HEK293 (cell line): ENCODE measurements at regions of chr1 and their contacts with region 1.

Region 1: DNA sequence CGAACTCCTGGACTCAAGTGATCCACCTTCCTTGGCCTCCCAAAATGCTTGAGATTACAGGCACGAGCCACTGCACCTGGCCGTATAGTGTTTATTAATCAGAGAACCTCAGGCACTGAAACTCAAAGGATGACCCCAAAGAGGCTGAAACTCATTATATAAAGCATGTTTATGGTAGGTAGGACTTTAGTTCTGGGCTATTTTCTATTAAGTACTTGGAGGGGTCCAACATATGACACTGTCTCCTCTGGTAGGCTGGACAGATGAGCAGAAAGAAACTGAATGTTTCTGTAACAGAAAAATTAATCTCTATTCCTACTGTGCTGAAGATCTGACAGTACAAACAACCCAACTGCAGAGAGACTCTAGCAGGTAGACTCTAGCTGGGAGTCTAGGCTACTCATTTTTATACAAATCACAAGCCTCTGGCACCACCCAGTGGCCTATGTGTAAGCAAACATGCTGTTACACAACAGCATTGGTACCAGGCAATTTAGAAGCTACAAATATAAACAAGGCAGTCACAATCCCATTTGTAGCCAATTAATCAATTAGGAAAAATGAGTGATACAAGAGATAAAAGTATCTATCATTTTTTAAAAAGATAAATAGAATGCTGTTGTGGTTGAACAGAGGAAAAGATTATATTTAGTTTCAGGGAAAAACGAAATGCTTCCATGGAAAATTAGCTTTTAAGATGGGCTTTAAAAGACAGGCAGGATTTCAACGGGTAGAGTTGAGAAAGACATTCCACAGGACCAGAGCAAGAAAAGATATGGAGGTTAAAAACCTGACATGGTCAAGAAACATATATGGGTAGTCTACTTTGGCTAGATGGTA is 10.4 kb downstream of the DCAF8 start:
- H3K4me3 ChIP-seq: no peak overlapping the region
- H3K27ac ChIP-seq: no peak overlapping the region
- H3K4me1 ChIP-seq: peaks cover 10% of the 10 kb centered on the region; the same call in 1 of the 2 replicates
- CTCF ChIP-seq: no peak

Region 2: GRCh38 chr1:160046494-160047110 is 205.3 kb before region 1 on chr1:
- CTCF ChIA-PET with region 1: interaction called, 10 read pairs
- POLR2A ChIA-PET with region 1: no interaction called
- H3K4me3 ChIP-seq: no peak overlapping the region
- H3K27ac ChIP-seq: no peak overlapping the region
- H3K4me1 ChIP-seq: no peaks in the 10 kb centered on the region
- CTCF ChIP-seq: peak; percentile 59

Region 3: GRCh38 chr1:160108888-160109662 is 142.8 kb before region 1 on chr1:
- CTCF ChIA-PET with region 1: interaction called, 144 read pairs
- POLR2A ChIA-PET with region 1: no interaction called
- H3K4me3 ChIP-seq: no peak overlapping the region
- H3K27ac ChIP-seq: no peak overlapping the region
- H3K4me1 ChIP-seq: no peaks in the 10 kb centered on the region
- CTCF ChIP-seq: no peak

Region 4: DNA sequence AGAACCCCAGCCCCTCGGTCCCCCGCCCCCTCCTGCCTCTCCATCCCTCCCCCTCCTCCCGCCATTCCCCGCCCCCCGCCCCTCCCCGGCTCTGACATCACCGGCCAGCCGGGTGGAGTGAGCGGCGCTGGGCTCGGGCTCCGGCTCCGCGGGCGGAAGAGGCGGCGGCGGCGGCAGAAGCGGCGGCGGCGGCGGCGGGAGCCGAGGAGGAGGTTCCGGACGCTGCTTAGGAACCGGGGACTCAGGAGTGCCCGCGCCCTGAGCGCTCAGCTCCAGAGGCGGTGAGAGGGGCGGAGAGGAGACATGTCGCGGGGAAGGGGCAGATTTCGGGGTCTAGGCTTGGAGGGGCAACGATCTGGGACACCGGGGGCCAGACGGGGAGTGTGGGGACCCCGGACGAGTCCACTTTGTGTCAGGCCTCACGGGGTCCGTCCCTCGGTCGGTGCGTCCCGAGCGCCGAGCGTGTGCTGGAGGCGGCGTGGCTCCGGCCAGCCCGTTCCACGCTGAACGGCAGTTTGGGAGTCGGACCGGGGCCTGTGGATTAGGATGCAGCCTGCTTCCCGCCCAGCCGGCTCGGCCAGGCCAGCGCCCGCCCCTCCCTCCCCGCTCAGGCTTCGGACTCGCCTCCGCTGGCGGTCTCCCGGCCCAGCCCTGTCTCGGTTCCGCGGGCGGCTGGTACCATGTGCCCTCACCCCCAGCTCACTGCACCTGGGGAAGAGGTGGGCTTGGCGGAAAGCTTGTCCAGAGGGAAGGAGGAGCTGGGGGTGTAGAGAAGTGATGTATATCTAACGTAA is 46.5 kb before region 1 on chr1 and contains the start of gene PEA15:
- CTCF ChIA-PET with region 1: interaction called, 12 read pairs
- POLR2A ChIA-PET with region 1: no interaction called
- H3K4me3 ChIP-seq: peak within 1 kb of the TSS; percentile 70
- H3K27ac ChIP-seq: peak within 1 kb of the TSS; percentile 82
- H3K4me1 ChIP-seq: 0 out of 2 replicates have a peak, but pooled peaks cover 2% of the 10 kb centered on the region
- CTCF ChIP-seq: 0 out of 2 replicates have a peak, but pooled peaks have one; percentile 16

Region 5: DNA sequence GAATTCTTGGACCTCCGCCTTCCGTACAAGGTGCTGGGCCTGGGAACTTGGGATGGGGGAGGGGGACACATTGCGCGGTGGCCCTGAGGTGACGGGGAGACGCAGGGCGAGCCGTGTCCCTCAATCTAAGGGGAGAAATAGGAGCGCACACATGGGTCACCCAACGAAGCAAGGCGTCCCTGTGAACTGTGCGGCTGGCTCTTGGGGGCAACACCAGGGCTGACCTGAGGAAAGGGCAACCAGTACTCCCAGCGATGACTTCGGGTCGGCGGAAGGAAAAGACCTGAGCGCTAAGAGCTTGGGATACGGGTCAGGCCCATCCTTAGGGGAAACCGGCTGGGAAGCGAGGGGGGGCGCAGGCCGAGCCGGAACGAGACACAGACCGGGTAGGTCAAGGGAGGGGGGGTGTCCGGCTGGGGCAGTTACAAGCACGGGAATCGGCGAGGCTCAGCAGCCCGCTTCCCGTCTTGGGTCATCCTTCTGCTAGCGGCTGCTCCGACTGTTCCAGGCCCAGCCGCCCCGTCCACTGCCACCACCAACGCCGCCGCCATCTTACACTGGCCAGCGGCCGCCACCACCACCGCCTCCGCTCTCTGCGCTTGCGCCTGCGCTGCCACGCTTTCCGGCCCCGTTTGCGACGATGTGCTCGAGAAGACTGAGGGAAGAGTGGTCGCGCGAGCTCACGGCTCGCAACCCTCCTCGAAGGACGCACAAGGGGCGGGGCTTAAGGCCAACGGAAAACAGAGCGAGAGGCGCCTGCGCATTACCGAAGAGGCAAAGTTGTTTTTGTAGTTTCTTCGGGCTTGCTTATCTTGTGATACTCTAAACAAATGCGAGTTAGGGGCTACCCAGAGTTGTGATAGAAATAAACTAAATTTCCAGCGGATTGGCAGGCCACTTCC is 10.2 kb after region 1 on chr1 and contains the start of gene DCAF8:
- CTCF ChIA-PET with region 1: interaction called, 16 read pairs
- POLR2A ChIA-PET with region 1: interaction called, 5 read pairs
- H3K4me3 ChIP-seq: peak within 1 kb of the TSS; percentile 94
- H3K27ac ChIP-seq: peak within 1 kb of the TSS; percentile 92
- H3K4me1 ChIP-seq: peaks cover 25% of the 10 kb centered on the region
- CTCF ChIP-seq: no peak; the same call in none of the 2 replicates

Region 6: DNA sequence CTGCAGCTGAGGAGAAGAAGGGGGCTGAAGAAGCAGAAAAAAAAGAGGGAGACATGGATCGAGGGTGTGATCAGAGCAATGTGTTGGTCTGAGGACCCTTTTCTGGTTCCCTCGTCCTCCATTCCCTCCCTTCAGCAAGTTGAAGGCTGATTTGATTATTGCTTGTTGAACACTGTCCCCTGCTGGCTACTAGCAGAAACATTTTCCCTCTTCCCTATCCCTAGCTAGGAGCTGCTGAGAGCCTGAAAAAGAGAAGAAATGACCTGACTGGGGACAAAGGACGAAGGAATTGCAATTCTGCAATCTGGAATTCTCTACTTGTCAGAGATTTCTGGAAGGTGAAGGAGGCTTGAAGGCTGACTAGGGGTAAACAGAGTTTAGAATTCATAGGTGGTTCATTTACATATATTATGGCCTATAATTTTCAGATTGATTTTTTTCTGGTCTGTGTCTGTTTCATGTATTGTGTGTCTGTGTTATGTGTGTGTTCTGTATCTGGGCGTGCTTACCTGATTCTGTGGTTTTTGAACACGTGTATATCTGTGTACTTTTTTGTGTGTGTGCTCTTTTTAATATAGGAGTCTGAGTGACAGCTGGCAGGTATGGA is 124.7 kb after region 1 on chr1:
- CTCF ChIA-PET with region 1: interaction called, 19 read pairs
- POLR2A ChIA-PET with region 1: no interaction called
- H3K4me3 ChIP-seq: no peak overlapping the region
- H3K27ac ChIP-seq: no peak overlapping the region
- H3K4me1 ChIP-seq: no peaks in the 10 kb centered on the region
- CTCF ChIP-seq: peak; percentile 91

Region 7: GRCh38 chr1:160460683-160461287 is 208.9 kb after region 1 on chr1:
- CTCF ChIA-PET with region 1: no interaction called
- POLR2A ChIA-PET with region 1: no interaction called
- H3K4me3 ChIP-seq: no peak overlapping the region
- H3K27ac ChIP-seq: no peak overlapping the region
- H3K4me1 ChIP-seq: no peaks in the 10 kb centered on the region
- CTCF ChIP-seq: no peak